Esophagus muscularis mucosa (tissue), 4 donors: ENCODE measurements at regions of chr1 and their contacts with region 1.

Region 1: DNA sequence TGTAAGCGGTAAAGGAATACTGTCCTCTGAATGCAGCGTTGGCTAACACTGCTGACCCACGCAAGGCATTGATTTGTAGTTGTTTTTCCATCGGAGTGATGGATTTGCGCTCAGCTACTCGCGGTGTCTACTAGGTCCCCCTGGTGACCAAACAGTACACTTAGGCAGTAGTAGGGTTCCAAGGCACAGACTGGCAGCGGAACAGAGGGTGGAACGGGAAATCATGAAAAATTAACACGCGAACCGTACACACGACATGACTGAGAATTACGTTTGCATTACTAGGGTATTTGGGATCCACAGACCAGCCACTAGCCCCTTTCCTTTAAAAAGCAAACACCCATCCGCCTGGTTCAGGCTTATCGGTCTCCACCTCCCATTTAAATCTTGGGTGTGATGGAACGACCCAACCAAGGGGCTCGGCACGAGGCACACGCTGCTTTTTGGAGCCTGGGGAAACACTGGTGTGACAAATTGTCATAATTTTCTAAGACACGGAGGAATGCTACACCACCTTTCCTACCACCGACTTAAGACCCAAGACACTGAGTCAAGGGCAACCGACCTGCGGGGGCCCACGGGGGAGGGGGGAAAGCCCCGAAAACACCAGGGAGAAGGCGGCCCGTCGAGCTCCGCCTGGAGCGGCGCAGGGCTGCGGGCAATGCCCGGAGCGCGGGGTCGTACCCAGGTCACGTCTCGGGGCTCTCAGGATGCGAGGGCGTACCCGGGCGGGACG is 699 bp downstream of the DIPK1A start:
- DNase-seq: no peak
- H3K4me3 ChIP-seq: peak overlapping the region; percentile 89 to 98 (median 90)
- H3K27ac ChIP-seq: peak overlapping the region; percentile 98 to 99 (median 98)
- H3K4me1 ChIP-seq: peaks cover 16 to 57% (median 53%) of the 10 kb centered on the region in 4 donors
- H3K27me3 ChIP-seq: no peaks in the 10 kb centered on the region
- CTCF ChIP-seq: peak; percentile 63 to 82 (median 64)
- EP300 ChIP-seq: no peak
- POLR2A ChIP-seq: no peak

Region 2: GRCh38 chr1:92709738-92710137 is 250.8 kb before region 1 on chr1:
- intact Hi-C with region 1: no loop called
- DNase-seq: no peak
- H3K4me3 ChIP-seq: no peak overlapping the region
- H3K27ac ChIP-seq: no peak overlapping the region
- H3K4me1 ChIP-seq: peaks cover 0 to 8% (median 2%) of the 10 kb centered on the region in 4 donors
- H3K27me3 ChIP-seq: no peaks in the 10 kb centered on the region
- CTCF ChIP-seq: no peak
- EP300 ChIP-seq: no peak
- POLR2A ChIP-seq: no peak

Region 3: GRCh38 chr1:92994105-92994712 is 33.6 kb after region 1 on chr1:
- intact Hi-C with region 1: loop called (anchors 2 kb)
- DNase-seq: peak; percentile 92
- H3K4me3 ChIP-seq: no peak overlapping the region
- H3K27ac ChIP-seq: no peak overlapping the region
- H3K4me1 ChIP-seq: no peaks in the 10 kb centered on the region
- H3K27me3 ChIP-seq: no peaks in the 10 kb centered on the region
- CTCF ChIP-seq: peak; percentile 82 to 86 (median 85)
- EP300 ChIP-seq: no peak
- POLR2A ChIP-seq: no peak

Region 4: GRCh38 chr1:93358293-93358692 is 397.7 kb after region 1 on chr1:
- intact Hi-C with region 1: no loop called
- DNase-seq: no peak
- H3K4me3 ChIP-seq: no peak overlapping the region
- H3K27ac ChIP-seq: no peak overlapping the region
- H3K4me1 ChIP-seq: peaks cover 9 to 47% (median 33%) of the 10 kb centered on the region in 4 donors
- H3K27me3 ChIP-seq: no peaks in the 10 kb centered on the region
- CTCF ChIP-seq: no peak
- EP300 ChIP-seq: no peak
- POLR2A ChIP-seq: no peak